ENCODE measurements at regions of chr7 and their contacts with region 1.

Region 1: DNA sequence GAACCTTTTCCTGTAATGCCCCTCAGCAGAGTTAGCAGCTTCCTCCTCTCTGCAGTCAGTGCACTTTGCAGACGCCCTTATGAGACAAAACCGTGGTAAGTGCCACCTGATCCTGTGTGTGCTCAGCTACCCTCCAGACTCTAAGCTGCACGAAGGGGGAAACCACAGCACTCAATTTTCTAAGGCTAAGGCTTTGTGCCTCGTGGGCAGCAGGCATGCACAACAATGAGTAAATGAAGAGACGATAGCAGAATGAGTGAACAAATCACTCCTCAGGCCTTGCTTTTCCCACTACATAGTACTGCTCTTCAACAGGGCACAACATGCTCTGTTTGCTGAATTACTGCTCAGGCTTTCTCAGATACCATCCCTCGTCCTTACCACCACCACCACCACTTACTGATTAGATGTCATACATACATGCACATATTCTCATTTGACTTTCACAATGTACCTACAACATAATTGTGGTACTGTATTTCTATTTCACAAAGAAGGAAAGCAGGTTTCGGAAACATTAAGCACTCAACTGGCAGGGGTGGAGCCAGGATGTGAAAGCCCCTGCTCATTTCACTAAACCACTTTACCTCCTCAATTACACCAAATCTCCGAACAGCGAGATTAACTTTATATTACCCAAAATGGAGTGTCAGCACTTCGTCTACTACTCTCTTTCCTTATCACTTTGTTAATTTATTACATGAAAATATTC is 85.4 kb downstream of the ICA1 start:
- DNase-seq: peak; percentile 62
- H3K4me3 Mint-ChIP-seq: peak overlapping the region; percentile 62
- H3K27ac Mint-ChIP-seq: peak overlapping the region; percentile 95
- H3K4me1 Mint-ChIP-seq: peaks cover 49% of the 10 kb centered on the region
- H3K27me3 Mint-ChIP-seq: no peaks in the 10 kb centered on the region

Region 2: GRCh38 chr7:7719236-7719635 is 457.3 kb before region 1 on chr7:
- intact Hi-C with region 1: loop called (anchors 1 kb)
- DNase-seq: peak; percentile 45
- H3K4me3 Mint-ChIP-seq: no peak overlapping the region
- H3K27ac Mint-ChIP-seq: peak overlapping the region; percentile 47
- H3K4me1 Mint-ChIP-seq: peaks cover 23% of the 10 kb centered on the region
- H3K27me3 Mint-ChIP-seq: no peaks in the 10 kb centered on the region

Measured in activated T-helper 2 cell treated with anti-CD3 and anti-CD28 coated beads, Interferon-gamma antibody, Interleukin-2, Interleukin-4, amounts not matched to agents 10 μg/mL and 5 μg/mL and 100 μg/mL, durations not matched to agents 14 hours and 24 hours and 36 hours (primary cell).